Right cardiac atrium (tissue), 5 donors: ENCODE measurements at regions of chr14 and their contacts with region 1.

Region 1: DNA sequence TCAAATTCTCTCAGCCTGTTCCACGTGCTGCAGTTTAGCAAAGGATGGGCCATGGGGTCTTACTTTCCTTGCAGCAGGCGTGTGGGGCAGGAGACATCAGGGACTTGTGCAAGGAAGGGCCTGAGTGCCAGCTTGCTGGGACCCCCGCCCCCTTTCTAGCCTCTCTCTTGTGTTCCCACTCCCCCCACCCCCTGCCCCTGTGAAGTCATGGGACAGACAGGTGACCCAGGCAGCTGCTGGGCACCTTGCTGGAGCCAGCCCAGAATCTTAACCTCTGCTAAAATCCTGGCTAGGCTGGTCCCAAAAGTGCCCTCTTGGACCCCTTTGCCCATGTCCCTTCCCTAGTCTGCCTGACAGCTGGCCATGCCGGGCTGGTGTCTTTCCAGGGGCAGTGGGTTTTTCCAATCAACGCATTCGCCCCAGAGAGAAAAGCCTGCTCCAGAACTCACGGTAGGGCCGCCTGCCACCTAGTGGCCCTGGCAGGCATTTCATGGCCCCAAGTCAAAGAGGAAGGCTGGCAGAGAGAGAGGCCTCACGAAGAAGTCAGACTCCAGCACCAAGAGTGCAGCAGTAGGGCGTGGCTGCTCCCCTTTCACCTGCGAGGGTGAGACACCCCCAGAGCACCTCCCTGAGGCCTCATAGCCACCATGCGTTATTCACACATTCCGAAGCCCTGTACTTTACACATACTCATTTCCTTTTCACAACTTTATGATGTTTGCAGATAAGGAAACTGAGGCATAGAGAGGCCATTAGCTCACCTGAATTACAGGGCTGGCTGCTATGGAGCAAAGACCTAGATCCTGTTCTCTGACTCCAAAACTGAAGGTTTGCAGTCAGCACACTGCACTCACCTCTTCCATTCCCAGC is 67.4 kb downstream of the LGMN start:
- DNase-seq: peak; percentile 78 to 91 (median 89)
- ATAC-seq: peak; percentile 50 to 60
- H3K4me3 ChIP-seq: no peak overlapping the region
- H3K27ac ChIP-seq: no peak overlapping the region
- H3K4me1 ChIP-seq: no peaks in the 10 kb centered on the region
- H3K27me3 ChIP-seq: no peaks in the 10 kb centered on the region

Region 2: DNA sequence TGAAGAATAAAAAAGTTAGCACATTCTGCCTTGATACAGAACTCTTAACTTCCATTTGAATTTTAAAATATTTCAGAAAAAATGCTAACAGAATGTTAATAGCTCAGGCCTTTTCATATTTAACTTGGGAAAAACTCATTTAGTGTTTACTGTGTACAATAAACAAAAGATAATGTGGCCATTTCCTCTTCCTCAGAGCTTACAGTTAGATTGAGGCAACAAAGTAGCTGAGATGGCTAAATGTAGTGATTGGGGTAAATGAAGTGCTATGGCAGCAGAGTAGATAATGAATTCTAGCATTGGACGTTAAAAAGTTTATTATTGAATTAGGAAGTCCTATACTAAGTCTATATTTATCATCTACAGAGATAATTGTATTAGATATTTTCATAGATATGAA is 546.6 kb before region 1 on chr14:
- intact Hi-C with region 1: loop called in 1 of 4 experiments (anchors 5 kb)
- DNase-seq: no peak
- ATAC-seq: no peak
- H3K4me3 ChIP-seq: no peak overlapping the region
- H3K27ac ChIP-seq: no peak overlapping the region
- H3K4me1 ChIP-seq: no peaks in the 10 kb centered on the region
- H3K27me3 ChIP-seq: no peaks in the 10 kb centered on the region